CD8-positive, alpha-beta T cell (primary cell): ENCODE measurements at regions of chr12 and their contacts with region 1.

Region 1: DNA sequence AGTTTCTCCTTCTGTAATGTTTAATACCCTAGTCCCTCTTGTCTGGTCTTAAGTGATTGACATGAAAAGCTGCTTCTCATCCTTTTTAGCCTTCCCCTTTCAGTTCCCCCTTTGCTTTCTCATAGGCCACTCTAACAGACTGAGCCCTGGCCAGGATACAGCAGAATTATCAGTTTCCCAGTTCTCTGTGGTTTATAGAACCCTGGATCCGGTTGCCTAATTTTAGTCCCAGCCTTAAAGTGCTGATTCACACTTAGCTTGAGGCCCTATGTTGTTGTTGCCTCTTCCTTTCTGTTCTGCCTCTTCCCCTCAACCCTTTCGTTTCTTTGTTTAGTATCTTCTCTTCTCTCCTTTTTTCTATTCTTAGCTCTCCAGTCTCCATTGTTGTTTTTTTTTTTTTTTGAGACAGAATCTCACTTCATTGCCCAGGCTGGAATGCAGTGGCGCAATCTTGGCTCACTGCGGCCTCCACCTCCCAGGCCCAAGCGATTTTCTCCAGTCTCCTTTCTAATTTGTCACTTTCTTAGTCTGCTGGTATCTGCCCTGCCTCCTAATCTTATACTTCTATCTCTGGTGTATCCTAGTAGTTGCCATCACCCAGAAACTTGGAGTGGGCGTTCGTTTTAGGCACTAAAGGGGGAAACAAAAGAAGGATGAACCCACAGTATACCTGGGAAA is 2.9 kb upstream of the BIN2 start:
- DNase-seq: peak in 2 of 9 experiments; percentile 17 to 49
- ATAC-seq: no peak
- H3K4me3 ChIP-seq: no peak overlapping the region
- H3K4me3 Mint-ChIP-seq: peak overlapping the region; percentile 35
- H3K27ac ChIP-seq: peak overlapping the region in 1 of 2 experiments; percentile 56
- H3K27ac Mint-ChIP-seq: peak overlapping the region; percentile 91
- H3K4me1 ChIP-seq: peaks cover 63% of the 10 kb centered on the region
- H3K4me1 Mint-ChIP-seq: peaks cover 77% of the 10 kb centered on the region
- H3K27me3 ChIP-seq: no peaks in the 10 kb centered on the region
- H3K27me3 Mint-ChIP-seq: no peaks in the 10 kb centered on the region
- CTCF ChIP-seq: no peak

Region 2: DNA sequence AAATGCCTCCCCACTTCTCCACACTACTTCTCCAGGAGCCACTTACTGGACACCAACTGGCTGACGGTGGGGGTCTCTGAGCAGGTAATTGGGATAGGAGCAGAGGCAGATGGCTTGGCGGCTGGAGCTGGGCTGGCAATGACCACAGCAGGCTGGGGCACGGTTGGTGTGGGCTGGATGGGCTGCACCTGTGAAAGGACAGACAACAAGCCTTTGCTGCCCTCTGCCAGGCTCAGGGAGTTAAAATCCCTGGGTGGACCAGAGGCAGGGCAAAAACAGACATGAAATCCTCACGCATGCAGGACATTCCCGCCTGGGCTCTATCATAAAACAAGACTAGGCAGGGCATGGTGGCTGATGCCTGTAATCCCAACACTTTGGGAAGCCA is 134.6 kb before region 1 on chr12:
- CTCF ChIA-PET with region 1: no interaction called
- POLR2A ChIA-PET with region 1: no interaction called
- intact Hi-C with region 1: no loop called
- DNase-seq: no peak
- ATAC-seq: no peak
- H3K4me3 ChIP-seq: no peak overlapping the region
- H3K4me3 Mint-ChIP-seq: no peak overlapping the region
- H3K27ac ChIP-seq: no peak overlapping the region
- H3K27ac Mint-ChIP-seq: no peak overlapping the region
- H3K4me1 ChIP-seq: no peaks in the 10 kb centered on the region
- H3K4me1 Mint-ChIP-seq: no peaks in the 10 kb centered on the region
- H3K27me3 ChIP-seq: no peaks in the 10 kb centered on the region
- H3K27me3 Mint-ChIP-seq: no peaks in the 10 kb centered on the region
- CTCF ChIP-seq: no peak

Region 3: DNA sequence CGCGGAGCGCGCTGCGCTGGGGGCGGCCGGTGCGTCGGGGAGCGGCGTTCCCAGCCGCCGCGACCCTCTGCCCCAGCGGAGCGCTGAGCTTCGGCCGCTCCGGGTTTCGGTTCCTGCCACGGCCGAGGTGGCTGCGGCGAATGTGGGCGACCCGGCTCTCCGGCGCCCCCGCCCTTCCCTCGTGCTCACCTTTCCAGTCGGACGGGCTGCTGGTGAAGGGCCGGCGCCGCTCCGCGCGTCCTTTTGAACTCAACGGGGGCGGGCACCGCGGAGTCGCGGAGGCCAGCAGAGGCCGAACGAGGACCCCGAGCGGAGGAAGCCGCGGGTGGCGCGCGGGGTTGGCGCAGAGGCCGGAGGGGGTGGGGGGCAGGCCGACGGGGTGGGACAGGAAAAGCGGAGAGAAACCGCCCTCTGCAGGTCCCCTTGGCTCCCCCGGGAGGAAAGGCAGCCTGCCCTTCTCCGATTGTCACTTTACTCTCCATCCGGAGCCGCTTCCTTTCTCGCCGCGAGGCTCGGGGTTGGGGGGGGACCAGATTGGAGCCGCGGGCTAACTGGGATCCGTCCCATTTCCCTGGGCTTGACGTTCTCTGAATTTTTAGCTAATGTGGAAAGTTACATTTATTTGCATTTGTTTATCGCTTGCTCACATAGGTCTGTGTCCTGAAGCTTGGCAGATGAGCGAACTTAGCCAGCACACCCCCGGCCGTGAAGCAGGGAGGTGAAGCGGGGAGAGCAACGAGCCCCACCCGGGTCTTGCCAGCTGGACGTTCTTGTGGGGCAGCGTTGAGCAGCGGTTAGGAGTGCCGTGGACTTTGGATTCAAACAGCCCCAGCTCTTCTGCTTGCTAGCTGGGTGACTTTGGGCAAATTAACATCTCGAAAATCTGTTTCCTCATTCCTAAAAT is 56.6 kb before region 1 on chr12 and contains the start of gene SMAGP:
- CTCF ChIA-PET with region 1: interaction called, 5 read pairs
- POLR2A ChIA-PET with region 1: interaction called, 4 read pairs
- intact Hi-C with region 1: loop called in 1 of 2 experiments (anchors 5 kb)
- DNase-seq: peak in 8 of 9 experiments; percentile 28 to 76 (median 52)
- ATAC-seq: peak; percentile 50
- H3K4me3 ChIP-seq: peak within 1 kb of the TSS; percentile 54 to 71
- H3K4me3 Mint-ChIP-seq: peak within 1 kb of the TSS; percentile 90
- H3K27ac ChIP-seq: peak within 1 kb of the TSS; percentile 42 to 58
- H3K27ac Mint-ChIP-seq: peak within 1 kb of the TSS; percentile 84
- H3K4me1 ChIP-seq: peaks cover 16% of the 10 kb centered on the region
- H3K4me1 Mint-ChIP-seq: peaks cover 23% of the 10 kb centered on the region
- H3K27me3 ChIP-seq: no peaks in the 10 kb centered on the region
- H3K27me3 Mint-ChIP-seq: no peaks in the 10 kb centered on the region
- CTCF ChIP-seq: no peak
- total RNA-seq, gene SMAGP: 1.9 to 2.3 TPM

Region 4: GRCh38 chr12:51285841-51286240 is 41.1 kb before region 1 on chr12:
- CTCF ChIA-PET with region 1: no interaction called
- POLR2A ChIA-PET with region 1: interaction called, 3 read pairs
- intact Hi-C with region 1: loop called in 1 of 2 experiments (anchors 5 kb)
- DNase-seq: no peak
- ATAC-seq: no peak
- H3K4me3 ChIP-seq: no peak overlapping the region
- H3K4me3 Mint-ChIP-seq: no peak overlapping the region
- H3K27ac ChIP-seq: no peak overlapping the region
- H3K27ac Mint-ChIP-seq: peak overlapping the region; percentile 81
- H3K4me1 ChIP-seq: no peaks in the 10 kb centered on the region
- H3K4me1 Mint-ChIP-seq: peaks cover 8% of the 10 kb centered on the region
- H3K27me3 ChIP-seq: no peaks in the 10 kb centered on the region
- H3K27me3 Mint-ChIP-seq: no peaks in the 10 kb centered on the region
- CTCF ChIP-seq: no peak

Region 5: DNA sequence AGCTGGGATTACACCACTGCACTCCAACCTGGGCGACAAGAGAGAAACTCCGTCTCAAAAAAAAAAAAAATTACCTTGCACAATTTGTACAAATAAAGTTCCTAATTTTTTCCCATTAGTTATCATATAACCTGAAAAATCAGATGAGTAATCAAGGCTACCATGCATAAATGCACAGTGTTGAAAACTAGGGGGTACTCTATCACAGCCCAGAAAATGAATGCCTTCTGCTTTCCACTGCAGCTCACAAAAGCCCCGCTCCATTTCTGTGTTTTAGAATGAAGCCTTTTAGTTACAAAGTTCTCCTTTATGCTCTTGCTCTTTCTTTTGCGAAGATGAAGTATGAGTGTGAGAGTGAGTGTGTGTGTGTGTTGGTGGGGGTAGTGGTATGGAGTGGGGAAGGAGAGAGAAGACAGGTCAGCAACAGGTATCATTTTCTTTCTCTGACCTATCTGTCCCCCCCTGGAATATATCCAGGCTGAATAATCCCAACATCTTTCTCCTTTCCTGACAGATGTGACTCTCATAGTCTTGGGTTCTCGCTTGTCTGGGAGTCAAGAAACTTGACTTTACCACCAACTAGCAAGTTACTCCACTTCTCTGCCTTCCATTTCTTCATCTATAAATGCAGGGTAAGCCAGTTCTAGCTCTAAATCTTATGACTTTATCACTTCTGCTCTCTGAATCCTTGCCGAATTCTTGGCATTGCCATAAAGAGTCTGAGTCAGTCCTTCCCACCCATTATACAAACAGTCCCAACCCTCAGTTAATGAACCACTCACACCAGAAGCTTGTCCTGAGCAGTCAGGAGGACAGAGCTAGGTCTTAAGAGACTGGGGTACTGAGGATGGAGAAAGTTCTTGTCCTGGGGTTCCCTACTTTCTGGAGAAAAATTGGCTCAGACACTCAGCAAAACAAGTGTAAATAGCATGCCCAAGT is 19.0 kb before region 1 on chr12:
- CTCF ChIA-PET with region 1: interaction called, 6 read pairs
- POLR2A ChIA-PET with region 1: interaction called, 3 read pairs
- intact Hi-C with region 1: loop called in 1 of 2 experiments (anchors 2 kb)
- DNase-seq: peak in 2 of 9 experiments; percentile 21 to 49
- ATAC-seq: peak; percentile 73
- H3K4me3 ChIP-seq: no peak overlapping the region
- H3K4me3 Mint-ChIP-seq: no peak overlapping the region
- H3K27ac ChIP-seq: peak overlapping the region; percentile 34 to 56
- H3K27ac Mint-ChIP-seq: peak overlapping the region; percentile 80
- H3K4me1 ChIP-seq: peaks cover 54% of the 10 kb centered on the region
- H3K4me1 Mint-ChIP-seq: peaks cover 74% of the 10 kb centered on the region
- H3K27me3 ChIP-seq: no peaks in the 10 kb centered on the region
- H3K27me3 Mint-ChIP-seq: no peaks in the 10 kb centered on the region
- CTCF ChIP-seq: no peak

Region 6: DNA sequence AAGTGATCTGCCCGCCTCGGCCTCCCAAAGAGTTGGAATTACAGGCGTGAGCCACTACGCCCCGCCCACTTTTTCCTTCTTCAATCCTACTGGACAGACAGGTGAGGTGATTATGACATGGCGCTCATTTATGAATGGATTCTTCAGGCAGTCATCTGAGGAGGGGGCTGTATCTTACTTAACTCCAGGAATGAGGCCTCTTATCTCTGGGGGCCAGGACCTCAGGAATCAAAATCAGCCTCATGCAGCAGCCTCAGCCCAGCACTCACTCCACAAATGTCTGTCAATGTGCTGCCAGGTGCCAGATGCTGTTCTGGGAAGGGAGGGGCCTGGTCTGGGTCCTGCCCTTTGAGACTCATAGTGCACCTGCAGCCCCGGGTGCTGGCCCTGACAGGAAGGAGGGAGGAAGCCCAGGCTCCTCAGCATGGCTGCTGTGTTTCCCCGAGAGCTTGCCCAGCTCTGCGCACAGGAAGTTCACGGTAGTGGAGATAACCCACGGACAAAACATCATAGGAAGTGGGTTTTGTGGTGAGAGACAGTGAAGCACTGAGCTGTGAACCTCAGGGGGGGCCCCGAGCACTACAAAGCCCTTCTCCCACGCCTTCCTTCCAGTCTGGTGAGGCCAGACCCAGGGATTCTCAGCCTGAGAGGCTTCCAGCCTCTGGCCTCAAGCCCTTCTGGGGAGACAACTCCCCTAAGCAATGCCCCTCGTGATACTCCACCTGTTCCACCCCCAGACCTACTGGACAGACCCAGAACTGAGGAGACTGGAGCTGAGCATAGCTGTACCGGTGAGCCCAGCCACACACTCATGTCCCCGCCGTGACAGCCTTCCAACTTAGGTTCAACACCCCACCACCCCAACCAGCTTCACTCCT is 42.0 kb after region 1 on chr12:
- CTCF ChIA-PET with region 1: no interaction called
- POLR2A ChIA-PET with region 1: no interaction called
- intact Hi-C with region 1: loop called in 1 of 2 experiments (anchors 2 kb)
- DNase-seq: peak; percentile 78 to 98 (median 88)
- ATAC-seq: peak; percentile 93
- H3K4me3 ChIP-seq: peak overlapping the region; percentile 38 to 49
- H3K4me3 Mint-ChIP-seq: peak overlapping the region; percentile 63
- H3K27ac ChIP-seq: peak overlapping the region; percentile 32 to 66
- H3K27ac Mint-ChIP-seq: peak overlapping the region; percentile 75
- H3K4me1 ChIP-seq: peaks cover 36% of the 10 kb centered on the region
- H3K4me1 Mint-ChIP-seq: peaks cover 49% of the 10 kb centered on the region
- H3K27me3 ChIP-seq: no peaks in the 10 kb centered on the region
- H3K27me3 Mint-ChIP-seq: no peaks in the 10 kb centered on the region
- CTCF ChIP-seq: no peak